AG04449 (cell line): ENCODE measurements at regions of chr20 and their contacts with region 1.

Region 1: GRCh38 chr20:34522969-34523871 is 7.0 kb downstream of the DYNLRB1 start:
- DNase-seq: peak; percentile 29
- H3K4me3 ChIP-seq: no peak overlapping the region
- CTCF ChIP-seq: peak; percentile 65

Region 2: GRCh38 chr20:34493646-34494045 is 29.6 kb before region 1 on chr20:
- CTCF ChIA-PET with region 1: no interaction called
- POLR2A ChIA-PET with region 1: no interaction called
- DNase-seq: no peak
- H3K4me3 ChIP-seq: no peak overlapping the region
- CTCF ChIP-seq: no peak

Region 3: GRCh38 chr20:34510575-34510974 is 12.6 kb before region 1 on chr20:
- CTCF ChIA-PET with region 1: interaction called, 10 read pairs
- POLR2A ChIA-PET with region 1: interaction called, 3 read pairs
- DNase-seq: no peak
- H3K4me3 ChIP-seq: no peak overlapping the region
- CTCF ChIP-seq: no peak